B cell (primary cell): ENCODE measurements at regions of chr5 and their contacts with region 1.

Region 1: GRCh38 chr5:65562731-65563701 is at the starts of genes CENPK and PPWD1:
- DNase-seq: peak; percentile 95
- ATAC-seq: peak; percentile 99
- H3K4me3 ChIP-seq: peak within 1 kb of the TSS; percentile 74 to 97 (median 91)
- H3K4me3 Mint-ChIP-seq: peak within 1 kb of the TSS; percentile 93
- H3K27ac ChIP-seq: peak within 1 kb of the TSS; percentile 89 to 90
- H3K27ac Mint-ChIP-seq: peak within 1 kb of the TSS; percentile 95
- H3K4me1 ChIP-seq: peaks cover 19 to 20% of the 10 kb centered on the region in 2 donors
- H3K4me1 Mint-ChIP-seq: peaks cover 38% of the 10 kb centered on the region
- H3K27me3 ChIP-seq: no peaks in the 10 kb centered on the region
- H3K27me3 Mint-ChIP-seq: no peaks in the 10 kb centered on the region
- CTCF ChIP-seq: no peak
- total RNA-seq, gene CENPK: 18.4 and 21.0 TPM in 2 replicates
- total RNA-seq, gene PPWD1: 89.4 and 91.0 TPM in 2 replicates

Region 2: DNA sequence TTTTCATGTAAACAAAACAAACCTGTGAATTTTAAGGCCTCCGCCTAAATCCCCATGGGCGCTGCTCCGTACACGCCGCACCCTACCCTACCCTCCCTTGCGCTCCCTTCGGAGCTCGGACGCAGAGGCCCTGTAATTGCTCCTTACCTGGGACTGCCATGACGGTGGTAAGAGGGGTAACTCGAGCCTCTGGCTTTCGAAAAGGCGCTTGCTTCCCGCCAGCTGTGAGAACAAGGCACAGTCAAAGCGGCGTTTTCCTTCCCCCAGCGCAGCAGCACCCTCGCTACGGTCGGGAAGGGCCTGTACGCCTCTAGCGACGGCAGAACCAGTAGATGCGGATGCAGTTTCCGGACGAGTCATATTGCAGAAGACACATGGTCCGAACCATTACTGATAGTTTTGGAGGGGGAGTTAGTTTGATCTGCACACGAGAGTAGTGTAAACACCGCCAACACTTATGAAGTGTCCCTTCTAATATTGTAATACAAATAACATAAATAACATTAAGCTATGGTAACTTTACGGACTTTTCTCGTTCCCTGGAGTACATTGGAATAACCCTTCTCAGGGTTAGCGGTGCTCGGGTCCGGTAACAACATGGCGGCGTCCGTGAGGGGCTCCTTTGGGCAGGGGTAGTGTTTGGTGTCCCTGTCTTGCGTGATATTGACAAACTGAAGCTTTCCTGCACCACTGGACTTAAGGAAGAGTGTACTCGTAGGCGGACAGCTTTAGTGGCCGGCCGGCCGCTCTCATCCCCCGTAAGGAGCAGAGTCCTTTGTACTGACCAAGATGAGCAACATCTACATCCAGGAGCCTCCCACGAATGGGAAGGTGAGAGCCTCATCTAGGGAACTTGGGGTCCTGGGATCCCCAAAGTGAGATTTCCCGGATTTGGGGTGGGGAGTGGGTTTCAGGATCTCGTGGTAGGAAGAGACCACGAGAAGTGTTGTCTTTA is 794.4 kb before region 1 on chr5 and contains the starts of genes CWC27 and SREK1IP1:
- CTCF ChIA-PET with region 1: no interaction called
- POLR2A ChIA-PET with region 1: interaction called, 3 read pairs
- intact Hi-C with region 1: loop called (anchors 1 kb)
- DNase-seq: peak; percentile 92
- ATAC-seq: peak; percentile 94
- H3K4me3 ChIP-seq: peak within 1 kb of the TSS; percentile 81 to 99 (median 96)
- H3K4me3 Mint-ChIP-seq: peak within 1 kb of the TSS; percentile 99
- H3K27ac ChIP-seq: peak within 1 kb of the TSS; percentile 73 to 84
- H3K27ac Mint-ChIP-seq: peak within 1 kb of the TSS; percentile 96
- H3K4me1 ChIP-seq: peaks cover 30 to 37% of the 10 kb centered on the region in 2 donors
- H3K4me1 Mint-ChIP-seq: peaks cover 55% of the 10 kb centered on the region
- H3K27me3 ChIP-seq: no peaks in the 10 kb centered on the region
- H3K27me3 Mint-ChIP-seq: no peaks in the 10 kb centered on the region
- CTCF ChIP-seq: no peak
- total RNA-seq, gene CWC27: 27.5 and 30.5 TPM in 2 replicates
- total RNA-seq, gene SREK1IP1: 21.0 and 25.5 TPM in 2 replicates

Region 3: GRCh38 chr5:64811050-64811640 is 751.9 kb before region 1 on chr5:
- CTCF ChIA-PET with region 1: no interaction called
- POLR2A ChIA-PET with region 1: no interaction called
- intact Hi-C with region 1: loop called (anchors 5 kb)
- DNase-seq: peak; percentile 56
- ATAC-seq: no peak
- H3K4me3 ChIP-seq: no peak overlapping the region
- H3K4me3 Mint-ChIP-seq: no peak overlapping the region
- H3K27ac ChIP-seq: no peak overlapping the region
- H3K27ac Mint-ChIP-seq: no peak overlapping the region
- H3K4me1 ChIP-seq: no peaks in the 10 kb centered on the region
- H3K4me1 Mint-ChIP-seq: no peaks in the 10 kb centered on the region
- H3K27me3 ChIP-seq: no peaks in the 10 kb centered on the region
- H3K27me3 Mint-ChIP-seq: no peaks in the 10 kb centered on the region
- CTCF ChIP-seq: peak; percentile 73

Region 4: DNA sequence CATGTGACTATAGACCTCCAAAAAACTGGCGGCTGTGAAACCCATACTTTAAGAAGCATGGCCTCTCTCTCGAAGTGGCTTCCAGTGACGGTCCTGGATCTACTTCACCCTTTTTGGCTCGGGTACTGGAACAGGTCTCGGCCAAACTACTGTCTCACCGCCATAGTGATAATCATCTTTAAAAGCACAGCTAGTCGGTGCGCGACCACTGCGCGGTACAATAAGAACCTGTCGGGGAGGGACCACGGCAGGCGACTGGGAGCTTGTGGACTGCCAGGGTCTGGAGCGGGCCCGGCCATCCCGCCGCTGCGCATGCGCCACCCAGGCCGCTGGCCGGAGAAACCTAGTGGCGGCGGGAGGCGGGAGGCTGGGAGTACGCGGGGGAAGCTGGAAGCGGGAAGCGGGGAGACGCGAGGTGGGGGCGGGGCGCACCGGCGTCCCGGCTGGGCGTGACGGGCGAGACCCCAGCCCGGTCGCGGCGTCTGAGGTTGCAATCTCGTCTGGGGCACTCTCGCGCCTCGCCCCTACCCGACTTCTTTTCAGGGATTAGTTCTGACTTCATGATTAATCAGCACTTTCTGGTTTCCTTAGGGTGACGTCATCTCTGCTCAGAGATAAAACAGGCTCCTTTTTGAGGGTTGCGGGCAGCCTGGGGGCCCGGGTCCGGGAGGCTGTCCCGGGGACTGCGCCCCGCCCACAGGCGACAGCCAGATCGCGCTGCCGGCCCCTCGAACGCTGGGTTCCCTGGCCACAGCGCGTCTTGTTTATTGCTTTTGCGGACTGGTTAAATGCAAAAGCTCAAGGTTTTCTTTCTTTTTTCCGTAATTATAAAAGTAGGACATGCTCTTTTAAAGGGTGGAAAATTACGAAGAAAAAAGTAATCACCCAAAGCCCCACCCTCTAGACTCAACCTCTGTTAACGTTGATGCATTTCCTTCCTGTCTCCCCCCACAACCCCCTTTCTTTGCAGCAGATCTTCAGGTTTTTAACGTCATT is 527.5 kb before region 1 on chr5:
- CTCF ChIA-PET with region 1: no interaction called
- POLR2A ChIA-PET with region 1: no interaction called
- intact Hi-C with region 1: loop called (anchors 10 kb)
- DNase-seq: peak; percentile 83
- ATAC-seq: peak; percentile 81
- H3K4me3 ChIP-seq: peak overlapping the region; percentile 73 to 92 (median 85)
- H3K4me3 Mint-ChIP-seq: peak overlapping the region; percentile 88
- H3K27ac ChIP-seq: peak overlapping the region; percentile 78 to 89
- H3K27ac Mint-ChIP-seq: peak overlapping the region; percentile 88
- H3K4me1 ChIP-seq: peaks cover 25 to 30% of the 10 kb centered on the region in 2 donors
- H3K4me1 Mint-ChIP-seq: peaks cover 27% of the 10 kb centered on the region
- H3K27me3 ChIP-seq: no peaks in the 10 kb centered on the region
- H3K27me3 Mint-ChIP-seq: no peaks in the 10 kb centered on the region
- CTCF ChIP-seq: no peak

Region 5: GRCh38 chr5:65102828-65103711 is 459.9 kb before region 1 on chr5:
- CTCF ChIA-PET with region 1: no interaction called
- POLR2A ChIA-PET with region 1: no interaction called
- intact Hi-C with region 1: loop called (anchors 5 kb)
- DNase-seq: peak; percentile 80
- ATAC-seq: peak; percentile 86
- H3K4me3 ChIP-seq: peak overlapping the region; percentile 40 to 76 (median 67)
- H3K4me3 Mint-ChIP-seq: peak overlapping the region; percentile 89
- H3K27ac ChIP-seq: peak overlapping the region; percentile 84 to 91
- H3K27ac Mint-ChIP-seq: peak overlapping the region; percentile 93
- H3K4me1 ChIP-seq: peaks cover 23% of the 10 kb centered on the region in 2 donors
- H3K4me1 Mint-ChIP-seq: peaks cover 23% of the 10 kb centered on the region
- H3K27me3 ChIP-seq: no peaks in the 10 kb centered on the region
- H3K27me3 Mint-ChIP-seq: no peaks in the 10 kb centered on the region
- CTCF ChIP-seq: no peak

Region 6: DNA sequence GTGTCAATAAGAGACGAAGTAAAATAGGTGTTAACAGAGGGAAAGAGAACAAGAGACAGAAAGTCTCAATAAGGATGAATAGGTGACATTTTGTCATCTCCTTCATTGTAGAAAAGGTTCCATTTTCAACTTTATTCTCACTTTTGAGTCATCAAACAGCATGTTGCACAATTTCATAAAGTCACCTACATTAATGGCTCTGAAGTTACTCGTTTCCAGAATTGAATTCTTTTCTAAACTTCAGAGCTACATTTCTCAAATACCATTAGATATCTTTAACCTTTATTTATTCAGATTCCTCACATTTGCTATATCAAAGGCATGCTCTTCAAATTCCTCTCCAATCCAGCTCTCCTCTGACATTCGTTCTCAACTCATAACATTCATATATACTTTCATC is 94.4 kb before region 1 on chr5:
- CTCF ChIA-PET with region 1: no interaction called
- POLR2A ChIA-PET with region 1: no interaction called
- intact Hi-C with region 1: no loop called
- DNase-seq: no peak
- ATAC-seq: no peak
- H3K4me3 ChIP-seq: no peak overlapping the region
- H3K4me3 Mint-ChIP-seq: no peak overlapping the region
- H3K27ac ChIP-seq: no peak overlapping the region
- H3K27ac Mint-ChIP-seq: no peak overlapping the region
- H3K4me1 ChIP-seq: no peaks in the 10 kb centered on the region
- H3K4me1 Mint-ChIP-seq: no peaks in the 10 kb centered on the region
- H3K27me3 ChIP-seq: no peaks in the 10 kb centered on the region
- H3K27me3 Mint-ChIP-seq: no peaks in the 10 kb centered on the region
- CTCF ChIP-seq: no peak

Region 7: DNA sequence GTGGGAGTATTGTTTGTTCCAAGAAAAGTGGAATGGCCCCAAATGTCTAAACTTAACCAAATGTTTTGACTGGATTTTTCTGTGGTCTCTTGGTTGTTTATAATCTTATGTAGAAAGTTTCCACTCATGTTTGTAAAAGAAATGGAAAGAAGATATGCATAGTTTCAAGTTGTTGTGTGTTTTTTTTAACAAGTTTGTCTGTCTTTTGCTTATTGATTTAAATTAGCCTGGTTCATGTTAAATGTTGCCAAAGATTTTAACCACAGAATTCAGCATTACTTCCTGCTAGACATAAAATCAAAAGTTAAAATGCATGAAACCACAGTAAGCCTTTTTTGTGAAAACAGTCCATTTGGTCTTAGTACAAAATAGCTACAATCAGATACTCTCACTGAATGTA is 14.1 kb after region 1 on chr5:
- CTCF ChIA-PET with region 1: no interaction called
- POLR2A ChIA-PET with region 1: no interaction called
- intact Hi-C with region 1: no loop called
- DNase-seq: no peak
- ATAC-seq: no peak
- H3K4me3 ChIP-seq: no peak overlapping the region
- H3K4me3 Mint-ChIP-seq: no peak overlapping the region
- H3K27ac ChIP-seq: no peak overlapping the region
- H3K27ac Mint-ChIP-seq: no peak overlapping the region
- H3K4me1 ChIP-seq: no peaks in the 10 kb centered on the region
- H3K4me1 Mint-ChIP-seq: peaks cover 2% of the 10 kb centered on the region
- H3K27me3 ChIP-seq: no peaks in the 10 kb centered on the region
- H3K27me3 Mint-ChIP-seq: no peaks in the 10 kb centered on the region
- CTCF ChIP-seq: no peak

Region 8: DNA sequence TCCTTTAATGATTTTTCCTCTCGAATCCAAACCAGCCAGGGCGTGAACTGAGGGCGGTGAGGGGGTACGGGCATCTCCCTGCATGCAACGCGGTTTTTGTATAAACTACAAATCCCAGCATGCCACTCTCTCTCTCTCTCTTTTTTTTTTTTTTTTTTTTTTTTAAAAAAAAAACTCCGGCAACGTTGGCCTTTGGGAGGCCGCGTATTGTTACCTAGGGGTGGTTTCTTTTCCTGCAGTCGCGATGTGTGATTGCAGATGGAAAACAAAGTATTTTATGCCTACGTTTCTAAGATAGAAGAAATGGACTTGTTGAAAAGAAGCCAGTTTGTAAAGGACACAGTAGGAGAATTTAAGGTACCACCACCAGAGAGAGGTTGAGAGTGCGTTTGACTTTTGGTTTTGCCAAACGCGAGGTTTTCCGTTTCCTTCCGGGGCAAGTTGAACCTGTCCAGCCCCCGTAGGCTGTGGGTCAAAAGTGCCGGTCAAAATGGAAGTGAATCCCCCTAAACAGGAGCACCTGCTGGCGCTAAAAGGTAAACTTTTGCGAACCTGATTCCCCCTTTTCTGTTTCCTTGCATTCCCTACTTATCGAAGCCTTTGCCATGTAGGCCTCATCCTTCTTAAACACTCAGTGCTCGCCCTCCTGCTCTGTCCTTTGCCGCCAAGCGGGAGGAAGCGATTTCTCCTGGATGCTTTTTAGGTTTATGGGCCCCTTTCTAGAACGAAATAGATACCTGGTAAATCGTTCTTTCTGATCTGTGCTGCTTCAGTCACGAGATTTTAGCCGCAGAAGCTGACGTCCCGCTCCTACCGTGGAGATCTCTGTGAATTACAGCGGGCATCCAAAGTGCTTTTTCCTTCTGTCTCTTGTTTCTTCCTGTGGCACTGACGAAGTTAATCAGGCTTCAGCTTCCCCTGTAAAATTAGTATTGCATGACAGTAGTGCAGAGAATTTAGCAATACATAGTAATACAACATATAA is 61.8 kb after region 1 on chr5 and contains the starts of genes SHLD3 and TRAPPC13:
- CTCF ChIA-PET with region 1: interaction called, 7 read pairs
- POLR2A ChIA-PET with region 1: interaction called, 9 read pairs
- intact Hi-C with region 1: loop called (anchors 1 kb)
- DNase-seq: peak; percentile 96
- ATAC-seq: peak; percentile 76
- H3K4me3 ChIP-seq: peak within 1 kb of the TSS; percentile 88 to 99 (median 88)
- H3K4me3 Mint-ChIP-seq: peak within 1 kb of the TSS; percentile 99
- H3K27ac ChIP-seq: peak within 1 kb of the TSS; percentile 73 to 84
- H3K27ac Mint-ChIP-seq: peak within 1 kb of the TSS; percentile 98
- H3K4me1 ChIP-seq: peaks cover 16 to 21% of the 10 kb centered on the region in 2 donors
- H3K4me1 Mint-ChIP-seq: peaks cover 41% of the 10 kb centered on the region
- H3K27me3 ChIP-seq: no peaks in the 10 kb centered on the region
- H3K27me3 Mint-ChIP-seq: no peaks in the 10 kb centered on the region
- CTCF ChIP-seq: peak; percentile 18
- total RNA-seq, gene SHLD3: 6.3 and 6.7 TPM in 2 replicates
- total RNA-seq, gene TRAPPC13: 18.8 and 24.4 TPM in 2 replicates